ENCODE measurements at regions of chr10 and their contacts with region 1.

Region 1: GRCh38 chr10:50396491-50397311 is 145.4 kb upstream of the ASAH2 start:
- DNase-seq: peak; percentile 73
- ATAC-seq: 0 out of 2 replicates have a peak, but pooled peaks have one; percentile 6
- H3K4me3 ChIP-seq: no peak overlapping the region
- H3K27ac ChIP-seq: 0 out of 2 replicates have a peak overlapping the region, but pooled peaks have one; percentile 81
- H3K4me1 ChIP-seq: peaks cover 56% of the 10 kb centered on the region
- H3K27me3 ChIP-seq: no peaks in the 10 kb centered on the region
- CTCF ChIP-seq: no peak

Region 2: DNA sequence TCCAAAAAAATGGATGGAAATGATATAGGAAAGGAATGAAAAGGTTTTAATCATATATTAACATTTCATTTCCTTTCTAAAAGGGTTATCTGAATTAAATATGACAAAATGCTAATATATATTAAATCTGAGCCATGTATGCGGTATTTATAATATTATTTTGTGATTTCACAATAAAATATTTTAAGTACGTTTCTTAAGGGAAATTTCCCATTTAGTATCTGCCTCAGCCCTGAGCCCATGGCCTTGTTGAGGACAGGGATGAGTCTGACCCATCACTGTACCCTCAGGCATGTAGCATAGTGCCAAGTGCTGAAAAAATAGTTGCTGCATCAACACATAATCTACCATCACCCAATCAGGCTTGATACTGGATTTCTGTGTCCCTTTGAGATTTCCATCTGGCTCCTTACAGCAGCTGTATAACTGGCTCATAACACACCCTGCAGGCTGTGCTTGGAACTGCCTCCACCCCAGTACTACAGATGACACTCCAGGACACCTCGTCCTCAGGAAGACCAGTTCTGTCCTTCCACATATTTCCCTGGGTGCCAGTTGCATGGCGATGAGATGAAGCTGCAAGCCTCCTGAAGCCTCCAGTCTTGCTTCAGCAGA is 86.0 kb before region 1 on chr10:
- CTCF ChIA-PET with region 1: no interaction called
- POLR2A ChIA-PET with region 1: no interaction called
- intact Hi-C with region 1: no loop called
- DNase-seq: peak; percentile 84
- ATAC-seq: peak; percentile 68
- H3K4me3 ChIP-seq: no peak overlapping the region
- H3K27ac ChIP-seq: no peak overlapping the region
- H3K4me1 ChIP-seq: peaks cover 13% of the 10 kb centered on the region
- H3K27me3 ChIP-seq: no peaks in the 10 kb centered on the region
- CTCF ChIP-seq: peak; percentile 90

Region 3: DNA sequence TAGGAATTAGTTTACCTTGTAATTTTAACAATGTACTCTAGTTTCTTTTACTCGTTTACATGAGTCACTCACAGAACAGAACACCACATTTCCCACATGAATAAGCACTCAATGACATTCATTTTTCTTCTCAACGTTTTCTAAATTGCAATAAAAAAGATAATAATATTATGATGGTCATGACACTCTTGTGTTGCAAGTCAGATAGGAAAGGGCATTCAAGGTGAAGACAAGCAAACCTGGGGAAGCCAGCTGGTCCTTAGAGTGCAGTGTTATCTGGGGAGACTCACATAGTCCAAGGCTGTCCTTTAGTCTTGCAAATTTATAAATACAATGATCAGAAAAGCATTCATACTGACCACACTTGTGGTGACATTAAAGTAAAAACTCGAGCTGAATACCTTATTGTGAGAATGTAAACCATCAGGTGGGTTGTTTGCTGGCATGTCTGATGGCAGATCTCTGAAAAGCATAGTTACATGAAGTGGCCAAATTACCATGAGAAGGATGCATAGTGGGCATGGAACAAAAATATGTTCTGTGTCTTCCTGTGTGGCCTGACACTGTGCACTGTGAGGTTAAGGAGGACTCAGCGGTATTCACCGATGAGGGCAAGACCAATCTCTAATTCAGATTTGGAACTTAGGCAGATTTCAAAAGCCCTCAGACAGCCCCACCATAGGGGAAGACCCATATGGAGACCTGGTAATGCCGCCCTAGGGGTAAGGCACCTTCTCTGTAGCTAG is 13.5 kb after region 1 on chr10:
- CTCF ChIA-PET with region 1: interaction called, 3 read pairs
- POLR2A ChIA-PET with region 1: interaction called, 9 read pairs
- intact Hi-C with region 1: loop called (anchors 2 kb)
- DNase-seq: peak; percentile 73
- ATAC-seq: peak; percentile 63
- H3K4me3 ChIP-seq: no peak overlapping the region
- H3K27ac ChIP-seq: peak overlapping the region; percentile 37
- H3K4me1 ChIP-seq: peaks cover 46% of the 10 kb centered on the region
- H3K27me3 ChIP-seq: no peaks in the 10 kb centered on the region
- CTCF ChIP-seq: no peak